Activated T-helper 2 cell treated with anti-CD3 and anti-CD28 coated beads, Interferon-gamma antibody, Interleukin-2, Interleukin-4, amounts not matched to agents 10 μg/mL and 5 μg/mL and 100 μg/mL, durations not matched to agents 14 hours and 24 hours and 36 hours (primary cell): ENCODE measurements at regions of chr4 and their contacts with region 1.

Region 1: GRCh38 chr4:98928505-98929340 is at the start of gene EIF4E:
- DNase-seq: peak; percentile 97
- H3K4me3 Mint-ChIP-seq: peak within 1 kb of the TSS; percentile 92
- H3K27ac Mint-ChIP-seq: peak within 1 kb of the TSS; percentile 95
- H3K4me1 Mint-ChIP-seq: peaks cover 33% of the 10 kb centered on the region
- H3K27me3 Mint-ChIP-seq: no peaks in the 10 kb centered on the region
- total RNA-seq, gene EIF4E: 142 and 153 TPM in 2 replicates

Region 2: GRCh38 chr4:98406819-98407218 is 521.9 kb before region 1 on chr4:
- intact Hi-C with region 1: loop called (anchors 1 kb)
- DNase-seq: no peak
- H3K4me3 Mint-ChIP-seq: no peak overlapping the region
- H3K27ac Mint-ChIP-seq: peak overlapping the region; percentile 51
- H3K4me1 Mint-ChIP-seq: peaks cover 12% of the 10 kb centered on the region
- H3K27me3 Mint-ChIP-seq: no peaks in the 10 kb centered on the region

Region 3: DNA sequence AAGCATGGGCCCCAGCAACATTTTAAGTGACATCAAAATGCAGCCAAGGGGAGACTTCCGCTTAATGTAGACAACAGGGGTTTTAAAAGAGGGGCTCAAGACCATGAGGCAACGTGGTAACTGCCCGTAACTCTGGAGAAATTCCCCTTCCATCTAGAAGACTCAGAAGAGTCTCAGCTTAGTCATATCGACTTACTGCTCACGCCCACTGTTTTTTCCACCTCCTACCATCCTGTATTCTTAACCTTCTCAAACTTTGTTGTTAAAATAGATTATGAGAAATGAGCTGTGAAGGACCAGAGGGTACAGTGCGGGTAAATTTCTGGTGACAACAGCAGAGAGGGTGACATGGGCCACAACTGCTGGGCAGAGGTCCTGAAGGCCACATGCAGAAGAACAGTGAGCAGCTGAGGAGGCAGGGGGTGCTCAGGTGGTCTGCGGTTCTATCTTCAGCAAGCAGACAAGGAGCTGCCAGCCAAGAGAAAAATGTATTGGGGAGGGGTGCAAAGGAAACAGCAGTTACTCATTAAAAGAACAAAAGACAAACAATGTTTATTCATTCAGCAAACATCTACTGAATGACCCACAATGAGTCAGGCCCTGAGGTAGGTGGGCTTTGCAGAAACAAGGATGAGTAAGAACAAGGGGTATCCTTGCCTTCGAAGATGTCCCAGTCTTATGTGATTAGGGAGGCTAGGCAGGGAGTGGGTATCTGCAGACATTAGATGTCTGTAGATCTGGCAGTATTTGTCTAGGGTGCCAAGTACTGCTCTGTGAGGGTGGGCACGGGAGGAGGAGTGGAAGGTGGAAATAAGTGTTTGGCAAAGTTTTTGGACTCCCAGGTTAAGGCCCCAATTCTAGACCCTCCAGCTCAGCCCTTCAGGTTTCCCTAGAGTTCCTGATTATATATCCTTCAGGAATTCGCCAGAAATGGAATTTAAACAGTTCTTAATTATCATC is 445.6 kb before region 1 on chr4:
- intact Hi-C with region 1: loop called (anchors 1 kb)
- DNase-seq: no peak
- H3K4me3 Mint-ChIP-seq: peak overlapping the region; percentile 70
- H3K27ac Mint-ChIP-seq: peak overlapping the region; percentile 99
- H3K4me1 Mint-ChIP-seq: peaks cover 88% of the 10 kb centered on the region
- H3K27me3 Mint-ChIP-seq: no peaks in the 10 kb centered on the region

Region 4: GRCh38 chr4:98648602-98649001 is 280.1 kb before region 1 on chr4:
- intact Hi-C with region 1: no loop called
- DNase-seq: no peak
- H3K4me3 Mint-ChIP-seq: no peak overlapping the region
- H3K27ac Mint-ChIP-seq: no peak overlapping the region
- H3K4me1 Mint-ChIP-seq: peaks cover 51% of the 10 kb centered on the region
- H3K27me3 Mint-ChIP-seq: no peaks in the 10 kb centered on the region

Region 5: GRCh38 chr4:99054428-99054994 is 125.8 kb after region 1 on chr4:
- intact Hi-C with region 1: loop called (anchors 2 kb)
- DNase-seq: no peak
- H3K4me3 Mint-ChIP-seq: no peak overlapping the region
- H3K27ac Mint-ChIP-seq: peak overlapping the region; percentile 75
- H3K4me1 Mint-ChIP-seq: peaks cover 41% of the 10 kb centered on the region
- H3K27me3 Mint-ChIP-seq: no peaks in the 10 kb centered on the region

Region 6: GRCh38 chr4:99563310-99564186 is 634.8 kb after region 1 on chr4 and contains the start of gene TRMT10A:
- intact Hi-C with region 1: loop called (anchors 1 kb)
- DNase-seq: peak; percentile 93
- H3K4me3 Mint-ChIP-seq: peak within 1 kb of the TSS; percentile 92
- H3K27ac Mint-ChIP-seq: peak within 1 kb of the TSS; percentile 95
- H3K4me1 Mint-ChIP-seq: peaks cover 12% of the 10 kb centered on the region
- H3K27me3 Mint-ChIP-seq: peaks cover 16% of the 10 kb centered on the region
- total RNA-seq, gene TRMT10A: 7.9 and 8.4 TPM in 2 replicates